Activated naive CD4-positive, alpha-beta T cell treated with anti-CD3 and anti-CD28 coated beads for 36 hours (primary cell): ENCODE measurements at regions of chr16 and their contacts with region 1.

Region 1: GRCh38 chr16:28218104-28218503 is 6.3 kb upstream of the XPO6 start:
- DNase-seq: peak; percentile 83
- H3K4me3 Mint-ChIP-seq: no peak overlapping the region
- H3K27ac Mint-ChIP-seq: no peak overlapping the region
- H3K4me1 Mint-ChIP-seq: peaks cover 2% of the 10 kb centered on the region
- H3K27me3 Mint-ChIP-seq: no peaks in the 10 kb centered on the region

Region 2: DNA sequence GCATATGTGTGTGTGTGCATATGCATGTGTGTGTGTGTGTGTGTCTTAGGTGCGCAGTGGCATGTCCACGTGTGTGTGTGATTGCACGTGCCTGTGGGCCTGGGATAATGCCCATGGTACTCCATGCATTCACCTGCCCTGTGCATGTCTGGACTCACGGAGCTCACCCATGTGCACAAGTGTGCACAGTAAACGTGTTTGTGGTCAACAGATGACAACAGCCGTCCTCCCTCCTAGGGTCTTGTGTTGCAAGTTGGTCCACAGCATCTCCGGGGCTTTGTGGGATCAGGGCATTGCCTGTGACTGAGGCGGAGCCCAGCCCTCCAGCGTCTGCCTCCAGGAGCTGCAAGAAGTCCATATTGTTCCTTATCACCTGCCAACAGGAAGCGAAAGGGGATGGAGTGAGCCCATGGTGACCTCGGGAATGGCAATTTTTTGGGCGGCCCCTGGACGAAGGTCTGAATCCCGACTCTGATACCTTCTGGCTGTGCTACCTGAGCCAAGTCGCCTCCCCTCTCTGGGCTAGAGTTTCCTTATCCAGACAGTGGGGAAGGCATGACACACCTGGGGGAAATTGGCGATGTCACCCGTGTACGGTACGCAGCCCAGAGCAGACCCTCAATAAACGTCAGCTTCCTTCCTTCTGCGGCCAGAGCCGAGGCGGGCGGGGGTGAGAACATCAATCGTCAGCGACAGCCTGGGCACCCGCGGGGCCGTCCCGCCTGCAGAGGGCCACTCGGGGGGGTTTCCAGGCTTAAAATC is 768.5 kb before region 1 on chr16:
- CTCF ChIA-PET with region 1: no interaction called
- intact Hi-C with region 1: no loop called
- DNase-seq: peak; percentile 92
- H3K4me3 Mint-ChIP-seq: peak overlapping the region; percentile 61
- H3K27ac Mint-ChIP-seq: peak overlapping the region; percentile 94
- H3K4me1 Mint-ChIP-seq: peaks cover 86% of the 10 kb centered on the region
- H3K27me3 Mint-ChIP-seq: no peaks in the 10 kb centered on the region

Region 3: DNA sequence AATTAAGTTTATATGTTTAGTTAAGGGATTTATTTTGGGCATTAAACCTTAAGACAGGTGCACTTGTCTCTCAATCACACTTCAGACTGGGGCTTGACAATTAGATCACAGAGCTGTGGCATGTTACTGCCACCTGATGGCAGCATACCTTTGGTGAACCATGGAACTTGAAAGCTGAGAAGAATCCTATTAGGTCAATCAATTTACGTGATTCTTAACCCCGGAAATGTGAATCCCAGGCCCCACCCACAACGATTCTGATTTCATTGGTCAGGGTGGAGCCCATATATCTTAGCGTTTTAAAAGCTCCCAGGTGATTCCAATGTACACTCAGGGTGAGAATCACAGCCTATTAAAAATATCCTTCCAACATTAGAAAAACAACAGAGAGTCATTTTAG is 245.6 kb before region 1 on chr16:
- CTCF ChIA-PET with region 1: interaction called, 21 read pairs
- intact Hi-C with region 1: loop called (anchors 1 kb)
- DNase-seq: peak; percentile 77
- H3K4me3 Mint-ChIP-seq: no peak overlapping the region
- H3K27ac Mint-ChIP-seq: no peak overlapping the region
- H3K4me1 Mint-ChIP-seq: no peaks in the 10 kb centered on the region
- H3K27me3 Mint-ChIP-seq: peaks cover 7% of the 10 kb centered on the region

Region 4: DNA sequence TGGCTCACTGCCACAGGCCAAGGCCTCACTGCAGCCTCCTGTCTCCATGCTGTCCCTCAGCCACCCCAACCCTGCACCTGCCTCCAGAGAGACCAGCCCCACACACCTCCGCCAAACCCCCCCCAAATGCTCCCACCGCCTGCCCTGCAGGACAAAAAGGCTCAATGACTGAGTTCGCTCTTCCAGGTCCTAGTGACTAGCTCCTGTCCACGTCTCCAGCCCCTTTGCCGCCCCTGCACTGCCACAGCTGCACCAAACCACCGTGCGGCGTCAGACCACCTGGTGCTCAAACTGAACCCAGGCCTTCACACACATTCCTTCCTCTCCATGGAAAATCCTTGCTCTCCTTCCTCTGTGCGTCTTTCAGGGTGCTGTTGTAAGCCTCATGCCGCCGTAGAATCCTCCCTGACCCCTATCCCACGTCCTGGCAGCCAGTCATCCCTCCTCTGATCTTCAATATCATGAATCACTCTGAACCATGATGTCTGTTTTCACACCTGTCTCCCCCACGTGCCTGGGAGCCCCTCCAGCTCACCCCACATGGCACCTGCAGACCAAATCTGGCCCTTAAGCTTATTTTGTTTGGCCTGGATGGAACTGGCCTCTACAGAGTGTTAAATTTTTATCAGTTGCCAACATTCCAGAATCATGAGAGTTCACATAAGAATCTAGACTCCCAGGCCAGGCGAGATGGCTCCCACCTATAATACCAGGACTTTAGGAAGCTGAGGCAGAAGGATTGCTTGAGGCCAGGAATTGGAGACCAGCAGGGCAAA is 150.3 kb before region 1 on chr16:
- CTCF ChIA-PET with region 1: interaction called, 18 read pairs
- intact Hi-C with region 1: loop called (anchors 2 kb)
- DNase-seq: no peak
- H3K4me3 Mint-ChIP-seq: no peak overlapping the region
- H3K27ac Mint-ChIP-seq: no peak overlapping the region
- H3K4me1 Mint-ChIP-seq: no peaks in the 10 kb centered on the region
- H3K27me3 Mint-ChIP-seq: peaks cover 12% of the 10 kb centered on the region

Region 5: DNA sequence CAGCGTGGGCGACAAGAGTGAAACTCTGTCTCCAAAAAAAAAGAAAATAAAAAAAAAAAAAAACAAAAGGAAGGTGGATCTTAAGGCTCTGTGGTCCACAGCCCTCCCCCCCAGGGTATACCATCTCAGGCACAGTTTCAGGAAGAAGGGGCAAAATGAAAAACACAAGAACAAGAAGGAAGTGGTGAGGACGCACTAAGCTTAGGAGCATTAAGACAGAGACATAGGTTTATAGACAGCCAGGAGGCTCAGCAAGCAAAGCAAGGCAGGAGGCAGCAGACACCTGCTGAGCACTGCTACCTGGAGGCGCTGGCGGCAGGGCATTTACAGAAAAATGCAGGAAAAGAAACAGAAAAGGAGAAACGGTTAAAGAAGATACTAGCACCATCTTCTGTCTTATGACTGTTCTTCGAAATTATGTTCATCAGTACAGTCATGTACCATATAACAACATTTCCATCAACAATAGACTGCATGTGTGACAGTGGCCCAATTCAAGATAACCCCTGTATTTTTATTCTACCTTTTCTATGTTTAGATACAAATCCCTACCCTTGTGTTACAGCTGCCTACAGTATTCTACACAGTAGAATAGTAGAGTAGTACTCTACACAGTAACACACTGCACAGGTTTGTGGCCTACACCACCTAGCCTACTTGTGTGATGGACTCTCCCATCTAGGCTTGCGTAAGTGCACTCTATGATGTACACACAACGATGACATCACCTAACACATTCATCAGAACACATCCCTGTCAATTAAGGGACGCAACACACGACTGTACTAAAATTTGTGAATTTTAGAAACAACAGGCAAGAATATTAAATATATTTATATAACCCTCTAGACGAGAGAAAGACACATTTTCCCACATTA is 68.9 kb before region 1 on chr16:
- CTCF ChIA-PET with region 1: interaction called, 17 read pairs
- intact Hi-C with region 1: no loop called
- DNase-seq: peak; percentile 56
- H3K4me3 Mint-ChIP-seq: peak overlapping the region; percentile 13
- H3K27ac Mint-ChIP-seq: peak overlapping the region; percentile 84
- H3K4me1 Mint-ChIP-seq: peaks cover 71% of the 10 kb centered on the region
- H3K27me3 Mint-ChIP-seq: no peaks in the 10 kb centered on the region

Region 6: GRCh38 chr16:28277537-28278388 is 59.7 kb after region 1 on chr16:
- CTCF ChIA-PET with region 1: no interaction called
- intact Hi-C with region 1: no loop called
- DNase-seq: peak; percentile 88
- H3K4me3 Mint-ChIP-seq: peak overlapping the region; percentile 66
- H3K27ac Mint-ChIP-seq: no peak overlapping the region
- H3K4me1 Mint-ChIP-seq: peaks cover 31% of the 10 kb centered on the region
- H3K27me3 Mint-ChIP-seq: no peaks in the 10 kb centered on the region